GM12878 (cell line): ENCODE measurements at regions of chr1 and their contacts with region 1.

Region 1: DNA sequence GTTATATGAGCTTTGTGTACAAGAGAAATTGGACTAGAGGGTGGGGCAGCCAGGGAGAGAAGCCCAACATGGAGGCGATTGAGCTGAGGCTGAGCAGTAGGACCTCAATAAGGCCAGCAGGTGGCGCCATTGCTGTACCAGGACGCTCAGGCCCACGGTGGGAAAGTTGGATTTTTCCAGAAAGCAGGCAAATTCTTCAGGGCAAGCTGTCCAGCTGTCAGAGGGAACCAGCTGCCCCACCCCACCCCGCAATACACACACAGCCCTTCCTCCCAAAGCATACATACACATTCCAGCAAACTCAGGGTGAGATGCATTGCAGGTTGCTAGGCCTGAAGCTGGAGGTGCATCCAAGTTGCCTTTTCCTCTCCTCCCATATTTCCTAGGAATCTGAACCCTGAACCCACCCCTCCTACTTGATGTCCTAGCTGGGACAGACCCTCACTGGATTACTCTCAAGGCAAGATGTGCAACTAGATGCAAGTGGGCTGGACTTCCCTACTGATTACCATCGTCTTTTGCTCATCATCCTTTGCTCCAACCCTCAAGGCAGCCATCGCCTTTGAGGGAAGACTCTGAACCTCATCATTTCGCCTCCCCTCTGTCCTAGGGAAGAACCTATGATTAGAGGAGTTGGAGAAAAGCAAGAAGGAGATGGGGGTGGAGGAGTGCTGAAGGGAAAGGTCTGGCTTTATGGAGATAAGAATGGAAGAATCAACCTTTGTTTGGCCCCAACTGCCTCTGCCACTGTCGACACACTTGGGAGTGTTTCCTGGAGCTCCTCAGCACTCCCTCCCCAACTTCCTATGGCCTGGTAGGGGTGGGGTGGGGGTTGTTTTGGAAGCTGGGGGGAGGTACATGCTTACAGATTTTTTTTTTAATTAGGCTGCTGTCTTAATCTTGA is 25.5 kb downstream of the CD34 start:
- DNase-seq: no peak
- ATAC-seq: peak; percentile 91
- H3K4me3 ChIP-seq: no peak overlapping the region
- H3K27ac ChIP-seq: no peak overlapping the region
- H3K4me1 ChIP-seq: peaks cover 12% of the 10 kb centered on the region
- H3K27me3 ChIP-seq: no peaks in the 10 kb centered on the region
- CTCF ChIP-seq: peak; percentile 87 to 95 (median 95)
- EP300 ChIP-seq: no peak
- POLR2A ChIP-seq: no peak
- RAD21 ChIP-seq: peak; percentile 78

Region 2: DNA sequence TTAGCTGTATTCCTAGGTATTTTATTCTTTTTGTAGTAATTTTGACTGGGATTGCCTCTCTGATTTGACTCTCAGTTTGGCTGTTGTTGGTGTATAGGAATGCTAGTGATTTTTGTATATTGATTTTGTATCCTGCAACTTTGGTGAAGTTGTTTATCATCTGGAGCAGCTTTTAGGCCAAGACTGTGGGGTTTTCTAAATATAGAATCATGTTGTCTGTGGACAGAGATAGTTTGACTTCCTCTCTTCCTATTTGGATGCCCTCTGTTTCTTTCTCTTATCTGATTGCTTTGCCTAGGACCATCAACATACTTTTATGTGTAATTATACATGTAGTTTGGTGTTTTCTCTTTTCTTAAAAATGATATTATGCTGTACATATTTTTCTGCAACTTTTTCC is 106.4 kb before region 1 on chr1:
- CTCF ChIA-PET with region 1: no interaction called
- POLR2A ChIA-PET with region 1: no interaction called
- RAD21 ChIA-PET with region 1: no interaction called
- SMC1A ChIA-PET with region 1: no interaction called
- in situ Hi-C with region 1: no loop called
- intact Hi-C with region 1: no loop called
- DNase-seq: no peak
- ATAC-seq: no peak
- H3K4me3 ChIP-seq: no peak overlapping the region
- H3K27ac ChIP-seq: no peak overlapping the region
- H3K4me1 ChIP-seq: no peaks in the 10 kb centered on the region
- H3K27me3 ChIP-seq: no peaks in the 10 kb centered on the region
- CTCF ChIP-seq: no peak
- EP300 ChIP-seq: no peak
- POLR2A ChIP-seq: no peak
- RAD21 ChIP-seq: no peak

Region 3: GRCh38 chr1:207797229-207797961 is 88.0 kb before region 1 on chr1:
- CTCF ChIA-PET with region 1: interaction called, 18 read pairs
- POLR2A ChIA-PET with region 1: no interaction called
- RAD21 ChIA-PET with region 1: interaction called, 14 read pairs
- SMC1A ChIA-PET with region 1: interaction called, 8 read pairs
- in situ Hi-C with region 1: no loop called
- intact Hi-C with region 1: no loop called
- DNase-seq: peak; percentile 38
- ATAC-seq: peak; percentile 84
- H3K4me3 ChIP-seq: no peak overlapping the region
- H3K27ac ChIP-seq: no peak overlapping the region
- H3K4me1 ChIP-seq: peaks cover 15% of the 10 kb centered on the region
- H3K27me3 ChIP-seq: no peaks in the 10 kb centered on the region
- CTCF ChIP-seq: peak; percentile 78 to 83 (median 80)
- EP300 ChIP-seq: no peak
- POLR2A ChIP-seq: no peak
- RAD21 ChIP-seq: peak; percentile 71

Region 4: GRCh38 chr1:207863893-207864535 is 21.4 kb before region 1 on chr1:
- CTCF ChIA-PET with region 1: interaction called, 244 read pairs
- POLR2A ChIA-PET with region 1: interaction called, 17 read pairs
- RAD21 ChIA-PET with region 1: interaction called, 27 read pairs
- SMC1A ChIA-PET with region 1: interaction called, 140 read pairs
- in situ Hi-C with region 1: no loop called
- intact Hi-C with region 1: no loop called
- DNase-seq: peak; percentile 70
- ATAC-seq: peak; percentile 80
- H3K4me3 ChIP-seq: peak overlapping the region; percentile 17; the same call in 1 of the 2 replicates
- H3K27ac ChIP-seq: peak overlapping the region; percentile 38
- H3K4me1 ChIP-seq: peaks cover 48% of the 10 kb centered on the region
- H3K27me3 ChIP-seq: no peaks in the 10 kb centered on the region
- CTCF ChIP-seq: peak; percentile 13 to 38 (median 30); a peak in 2 of 6 replicates
- EP300 ChIP-seq: 0 out of 4 replicates have a peak, but pooled peaks of 1 of the 2 experiments have one; percentile 19
- POLR2A ChIP-seq: peak; percentile 51
- RAD21 ChIP-seq: 0 out of 2 replicates have a peak, but pooled peaks have one; percentile 21

Region 5: GRCh38 chr1:207908107-207908734 is 22.8 kb after region 1 on chr1:
- CTCF ChIA-PET with region 1: interaction called, 10 read pairs
- POLR2A ChIA-PET with region 1: no interaction called
- RAD21 ChIA-PET with region 1: interaction called, 4 read pairs
- SMC1A ChIA-PET with region 1: interaction called, 9 read pairs
- in situ Hi-C with region 1: no loop called
- intact Hi-C with region 1: no loop called
- DNase-seq: no peak
- ATAC-seq: no peak; the same call in 2 of the 3 replicates
- H3K4me3 ChIP-seq: no peak overlapping the region
- H3K27ac ChIP-seq: no peak overlapping the region
- H3K4me1 ChIP-seq: no peaks in the 10 kb centered on the region
- H3K27me3 ChIP-seq: peaks cover 22 to 23% of the 10 kb centered on the region in 2 experiments
- CTCF ChIP-seq: 0 out of 6 replicates have a peak, but pooled peaks of 1 of the 3 experiments have one; percentile 9
- EP300 ChIP-seq: no peak
- POLR2A ChIP-seq: no peak
- RAD21 ChIP-seq: no peak

Region 6: DNA sequence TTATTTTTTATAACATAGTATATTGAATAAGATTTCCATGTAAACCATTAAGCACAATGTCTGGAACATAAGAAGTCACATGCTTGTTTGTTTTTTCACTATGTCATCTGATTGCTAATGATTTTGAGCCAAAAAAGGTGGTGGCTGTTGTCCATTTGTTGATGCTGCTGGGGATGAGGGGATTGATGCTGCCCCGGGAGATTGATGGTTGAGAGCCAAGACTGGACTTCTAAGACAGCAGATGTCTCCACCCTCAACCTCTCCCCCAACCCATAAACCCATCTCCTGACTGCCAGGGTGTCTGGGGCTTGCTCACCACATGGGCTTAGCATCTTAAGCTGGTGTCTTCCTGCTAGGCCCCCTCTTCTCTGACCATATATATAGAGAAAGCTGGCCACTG is 61.4 kb after region 1 on chr1:
- CTCF ChIA-PET with region 1: interaction called, 33 read pairs
- POLR2A ChIA-PET with region 1: interaction called, 7 read pairs
- RAD21 ChIA-PET with region 1: interaction called, 8 read pairs
- SMC1A ChIA-PET with region 1: interaction called, 20 read pairs
- in situ Hi-C with region 1: no loop called
- intact Hi-C with region 1: no loop called
- DNase-seq: no peak
- ATAC-seq: no peak
- H3K4me3 ChIP-seq: no peak overlapping the region
- H3K27ac ChIP-seq: no peak overlapping the region
- H3K4me1 ChIP-seq: no peaks in the 10 kb centered on the region
- H3K27me3 ChIP-seq: peaks cover 1 to 3% of the 10 kb centered on the region in 2 experiments; a peak in 2 of 4 replicates
- CTCF ChIP-seq: no peak
- EP300 ChIP-seq: no peak
- POLR2A ChIP-seq: no peak
- RAD21 ChIP-seq: no peak

Region 7: GRCh38 chr1:207963427-207964194 is 78.2 kb after region 1 on chr1:
- CTCF ChIA-PET with region 1: interaction called, 228 read pairs
- POLR2A ChIA-PET with region 1: interaction called, 25 read pairs
- RAD21 ChIA-PET with region 1: interaction called, 110 read pairs
- SMC1A ChIA-PET with region 1: interaction called, 112 read pairs
- in situ Hi-C with region 1: no loop called
- intact Hi-C with region 1: loop called (anchors 1 kb)
- DNase-seq: peak; percentile 38
- ATAC-seq: peak; percentile 96
- H3K4me3 ChIP-seq: peak overlapping the region; percentile 58
- H3K27ac ChIP-seq: peak overlapping the region; percentile 58
- H3K4me1 ChIP-seq: peaks cover 4% of the 10 kb centered on the region; the same call in 1 of the 2 replicates
- H3K27me3 ChIP-seq: peaks cover 5 to 14% of the 10 kb centered on the region in 2 experiments
- CTCF ChIP-seq: peak; percentile 88 to 100 (median 94); a peak in 5 of 6 replicates
- EP300 ChIP-seq: no peak
- POLR2A ChIP-seq: peak; percentile 94
- RAD21 ChIP-seq: peak; percentile 89

Region 8: DNA sequence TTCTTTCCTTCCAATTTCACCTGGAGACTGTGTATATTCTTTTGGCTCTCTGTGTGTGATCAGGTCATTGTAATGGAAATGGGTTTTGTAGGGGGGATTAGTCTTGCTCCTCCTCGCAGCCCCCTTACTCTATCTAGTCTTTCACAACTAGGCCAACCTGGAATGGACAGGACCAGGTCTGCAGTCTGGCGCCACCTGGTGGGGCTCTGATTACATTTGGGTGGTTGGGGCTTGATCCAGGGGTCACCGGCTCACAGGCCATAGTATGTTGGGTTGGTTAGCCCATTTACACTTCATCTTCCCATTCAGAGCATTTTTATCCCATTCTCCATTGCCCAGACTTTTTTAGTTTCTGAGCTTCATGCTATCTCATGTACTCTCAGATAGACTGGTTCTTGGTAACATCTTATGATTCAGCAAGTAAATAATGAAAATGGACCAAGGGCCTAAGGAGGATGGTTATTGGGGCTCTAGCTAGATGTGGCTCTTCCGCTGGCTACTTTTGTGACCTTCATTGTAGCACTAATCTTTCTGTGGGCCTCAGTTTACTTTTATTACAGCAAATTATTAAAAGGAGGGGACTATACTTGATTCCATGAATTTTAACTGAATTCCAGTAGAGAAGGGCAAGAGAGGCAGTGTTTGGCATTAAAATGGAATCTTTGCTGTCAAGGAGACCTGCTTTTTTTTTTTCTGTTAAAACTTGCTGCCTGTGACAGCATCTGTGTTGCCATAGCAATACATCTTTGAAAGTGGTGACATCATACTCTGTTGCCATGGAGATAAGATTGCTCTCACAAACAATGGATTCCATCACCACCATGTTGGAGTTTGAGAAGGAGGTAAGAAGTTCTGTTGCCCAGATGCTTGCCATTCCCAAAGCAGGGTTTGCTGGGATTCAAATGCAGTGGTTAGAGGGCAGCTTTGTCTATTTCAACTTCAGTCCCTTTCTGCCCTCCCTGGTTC is 208.7 kb after region 1 on chr1:
- CTCF ChIA-PET with region 1: interaction called, 21 read pairs
- POLR2A ChIA-PET with region 1: no interaction called
- RAD21 ChIA-PET with region 1: no interaction called
- SMC1A ChIA-PET with region 1: interaction called, 3 read pairs
- in situ Hi-C with region 1: no loop called
- intact Hi-C with region 1: loop called (anchors 5 kb)
- DNase-seq: no peak
- ATAC-seq: peak; percentile 95
- H3K4me3 ChIP-seq: no peak overlapping the region
- H3K27ac ChIP-seq: no peak overlapping the region
- H3K4me1 ChIP-seq: no peaks in the 10 kb centered on the region
- H3K27me3 ChIP-seq: no peaks in the 10 kb centered on the region; a peak in 1 of 4 replicates
- CTCF ChIP-seq: peak; percentile 78 to 89 (median 88)
- EP300 ChIP-seq: no peak
- POLR2A ChIP-seq: no peak
- RAD21 ChIP-seq: peak; percentile 59